ENCODE measurements at regions of chr11 and their contacts with region 1.

Region 1: DNA sequence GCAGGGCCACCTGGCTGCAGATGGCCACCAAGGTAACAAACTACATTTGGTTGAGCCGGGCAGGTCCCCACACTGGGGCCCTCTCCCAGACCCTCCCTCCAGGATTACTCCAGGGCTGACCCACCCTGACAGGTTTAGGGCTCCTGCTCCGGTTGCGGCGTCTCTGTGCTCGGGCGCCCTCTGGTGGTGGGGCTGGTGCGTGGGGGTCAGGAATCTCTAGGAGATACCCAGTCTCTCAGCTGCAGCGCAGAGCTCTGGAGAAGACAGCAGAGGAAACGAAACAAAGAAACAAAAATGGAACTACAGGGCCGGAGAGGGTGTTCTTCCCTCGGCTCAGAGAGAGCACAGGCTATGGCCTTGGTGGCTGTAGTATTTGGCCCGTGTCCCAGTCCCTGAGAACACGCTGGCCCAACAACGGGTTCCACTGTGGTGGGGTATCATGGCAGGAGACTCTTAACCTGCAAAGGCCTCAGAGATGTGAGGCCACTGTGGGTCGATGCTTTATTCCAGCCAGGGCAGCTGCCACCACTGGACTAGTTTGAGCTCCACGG is 2.4 kb downstream of the C11orf96 start:
- DNase-seq: peak; percentile 88
- ATAC-seq: peak; percentile 66

Region 2: DNA sequence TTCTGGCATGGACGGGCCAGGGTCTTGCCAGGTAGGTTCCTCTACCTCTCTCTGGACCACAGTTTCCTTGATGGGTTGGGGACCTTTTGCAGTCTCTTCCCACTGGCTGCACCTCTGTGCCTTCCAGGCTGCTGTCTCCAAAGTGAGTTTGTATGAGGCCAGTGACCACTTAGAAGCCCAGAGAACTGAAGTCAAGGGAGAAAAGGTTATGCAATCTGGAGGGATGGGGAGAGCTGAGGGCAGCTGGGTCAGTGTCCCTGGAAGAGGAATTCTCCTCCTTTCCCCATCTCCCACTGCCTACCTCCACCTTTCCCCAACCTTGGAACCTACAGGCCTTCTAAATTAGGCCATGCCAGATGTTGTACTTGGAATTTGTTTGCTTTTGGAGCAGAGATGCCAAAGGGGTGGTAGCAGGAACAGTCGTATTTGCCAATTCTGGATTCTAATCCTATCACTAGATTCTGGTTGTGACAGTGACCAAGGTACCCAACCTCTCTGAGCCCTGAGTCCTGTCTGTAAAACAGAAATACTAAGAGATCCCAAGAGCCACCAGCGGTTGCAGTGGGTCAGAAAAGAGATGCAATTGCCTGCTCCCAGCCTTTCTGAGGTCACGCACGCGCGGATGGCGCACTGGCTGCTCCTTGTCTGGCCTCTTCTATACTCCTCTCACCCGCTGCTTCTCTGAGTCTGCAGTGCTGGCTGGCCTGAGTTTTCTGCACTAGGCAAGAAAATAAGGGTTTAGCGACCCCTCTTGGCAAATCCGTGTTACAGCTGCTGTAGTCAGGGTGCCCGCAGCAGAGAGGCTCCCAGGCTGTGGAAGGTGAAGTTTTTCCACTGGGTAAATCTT is 92.2 kb after region 1 on chr11:
- intact Hi-C with region 1: loop called (anchors 10 kb)
- DNase-seq: peak; percentile 89
- ATAC-seq: peak; percentile 98

Region 3: DNA sequence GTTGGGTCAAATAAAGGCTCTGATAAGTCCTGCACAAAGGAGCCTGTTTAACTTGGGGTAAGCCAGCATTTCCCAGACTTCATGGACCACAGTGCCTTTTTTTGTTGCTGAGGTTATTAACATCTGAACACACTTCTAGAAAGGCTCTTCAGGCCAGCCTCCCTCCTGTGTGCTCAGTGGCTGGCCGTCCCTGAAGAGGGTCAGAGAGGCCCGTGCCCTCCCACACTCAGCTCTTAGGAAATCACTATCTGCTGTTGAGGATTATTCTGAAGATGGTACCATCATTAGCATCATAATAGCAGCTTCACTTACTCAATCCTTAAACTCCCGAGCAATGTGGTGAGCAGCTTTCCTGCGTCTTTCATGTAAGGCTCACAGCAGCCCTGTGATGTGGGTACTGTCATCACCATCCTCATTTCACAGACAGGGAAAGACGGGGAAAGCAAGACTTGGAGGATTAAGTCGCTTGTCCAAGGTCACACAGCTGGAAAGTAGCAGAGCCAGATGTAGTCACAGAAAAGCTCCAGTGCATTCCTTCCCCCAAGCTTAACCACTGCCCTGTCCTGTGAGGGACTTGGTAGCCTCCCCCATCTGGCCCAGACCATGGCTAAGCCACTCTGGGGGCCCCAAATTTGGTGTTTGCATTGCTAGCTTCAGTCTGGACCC is 853.2 kb after region 1 on chr11:
- intact Hi-C with region 1: no loop called
- DNase-seq: no peak
- ATAC-seq: peak; percentile 78